Gastrocnemius medialis (tissue), 4 donors: ENCODE measurements at regions of chr2 and their contacts with region 1.

Region 1: GRCh38 chr2:8681786-8682692 is at the start of gene ID2:
- DNase-seq: peak; percentile 97 to 99
- ATAC-seq: peak; percentile 62 to 71
- H3K4me3 ChIP-seq: peak within 1 kb of the TSS; percentile 60 to 75 (median 72)
- H3K27ac ChIP-seq: peak within 1 kb of the TSS; percentile 92 to 99 (median 98)
- H3K4me1 ChIP-seq: peaks cover 32 to 43% of the 10 kb centered on the region in 2 donors
- H3K27me3 ChIP-seq: no peaks in the 10 kb centered on the region
- CTCF ChIP-seq: no peak
- POLR2A ChIP-seq: peak; percentile 97 to 99
- total RNA-seq, gene ID2: 16.6 to 35.9 (median 27.4) TPM

Region 2: DNA sequence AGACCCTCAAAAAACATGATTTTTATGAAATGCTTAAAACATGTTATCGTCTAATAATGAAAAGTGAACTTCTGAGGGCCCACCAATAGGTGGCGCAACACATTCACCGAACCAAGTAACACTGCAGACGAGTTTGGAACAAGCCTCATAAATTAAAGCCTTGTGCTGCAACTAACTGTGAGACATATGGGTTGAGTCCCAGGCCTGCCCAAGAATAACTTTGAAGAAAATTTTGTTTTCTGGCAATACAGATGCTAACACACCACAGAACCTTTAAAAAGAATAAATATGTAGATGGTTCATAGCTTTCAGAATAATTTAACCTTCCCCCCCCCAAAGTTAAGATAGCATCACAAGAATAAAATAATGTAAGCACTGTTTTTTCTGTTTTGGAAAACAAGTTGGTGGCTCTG is 1479.0 kb before region 1 on chr2:
- in situ Hi-C with region 1: loop called in 1 of 4 experiments (anchors 25 kb)
- intact Hi-C with region 1: loop called (anchors 5 kb)
- DNase-seq: no peak
- ATAC-seq: no peak
- H3K4me3 ChIP-seq: no peak overlapping the region
- H3K27ac ChIP-seq: no peak overlapping the region
- H3K4me1 ChIP-seq: no peaks in the 10 kb centered on the region
- H3K27me3 ChIP-seq: no peaks in the 10 kb centered on the region
- CTCF ChIP-seq: peak; percentile 29 to 76 (median 46)
- POLR2A ChIP-seq: no peak

Region 3: GRCh38 chr2:8148260-8149008 is 533.6 kb before region 1 on chr2:
- in situ Hi-C with region 1: no loop called
- intact Hi-C with region 1: loop called (anchors 10 kb)
- DNase-seq: no peak
- ATAC-seq: no peak
- H3K4me3 ChIP-seq: no peak overlapping the region
- H3K27ac ChIP-seq: no peak overlapping the region
- H3K4me1 ChIP-seq: peaks cover 7 to 13% of the 10 kb centered on the region in 2 donors
- H3K27me3 ChIP-seq: no peaks in the 10 kb centered on the region
- CTCF ChIP-seq: no peak
- POLR2A ChIP-seq: no peak

Region 4: GRCh38 chr2:8412586-8412985 is 269.5 kb before region 1 on chr2:
- in situ Hi-C with region 1: no loop called
- intact Hi-C with region 1: loop called (anchors 5 kb)
- DNase-seq: peak; percentile 18 to 53
- ATAC-seq: peak in 1 of 2 donors; percentile 35
- H3K4me3 ChIP-seq: no peak overlapping the region
- H3K27ac ChIP-seq: peak overlapping the region in 2 of 4 donors; percentile 11 to 41
- H3K4me1 ChIP-seq: peaks cover 17% of the 10 kb centered on the region in 2 donors
- H3K27me3 ChIP-seq: no peaks in the 10 kb centered on the region
- CTCF ChIP-seq: no peak
- POLR2A ChIP-seq: no peak

Region 5: DNA sequence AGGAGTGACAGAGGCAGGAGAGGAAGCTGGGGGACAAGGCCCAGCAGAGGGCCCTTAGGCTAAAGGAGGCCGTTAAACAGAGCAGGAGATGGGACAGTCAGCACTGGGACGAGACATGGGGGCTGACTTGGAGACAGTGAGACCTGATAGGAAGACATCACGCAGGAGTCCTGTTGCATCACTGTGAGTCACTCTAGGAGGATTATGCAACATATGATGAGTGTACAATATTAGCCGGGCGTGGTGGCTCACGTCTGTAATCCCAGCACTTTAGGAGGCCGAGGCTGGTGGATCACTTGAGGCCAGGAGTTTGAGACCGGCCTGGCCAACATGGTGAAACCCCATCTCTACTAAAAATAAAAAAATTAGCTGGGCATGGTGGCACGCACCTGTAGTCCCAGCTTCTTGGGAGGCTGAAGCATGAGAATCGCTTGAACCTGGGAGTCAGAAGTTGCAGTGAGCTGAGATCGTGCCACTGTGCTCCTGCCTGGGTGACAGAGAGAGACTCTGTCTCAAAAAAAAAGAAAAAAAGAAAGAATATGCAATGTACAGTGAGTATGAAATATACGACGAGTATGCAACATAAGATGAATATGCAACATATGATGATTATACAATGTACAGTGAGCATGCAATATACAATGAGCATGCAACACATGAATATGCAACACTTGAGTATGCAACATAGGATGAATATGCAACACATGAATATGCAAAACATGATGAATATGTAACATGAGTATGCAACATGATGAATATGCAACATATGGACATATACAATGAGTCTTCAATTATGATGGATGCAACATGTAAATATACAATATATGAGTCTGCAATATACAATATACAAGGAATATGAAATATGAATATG is 83.5 kb before region 1 on chr2:
- in situ Hi-C with region 1: no loop called
- intact Hi-C with region 1: no loop called
- DNase-seq: peak in 1 of 2 donors; percentile 40
- ATAC-seq: peak; percentile 52 to 86
- H3K4me3 ChIP-seq: no peak overlapping the region
- H3K27ac ChIP-seq: no peak overlapping the region
- H3K4me1 ChIP-seq: no peaks in the 10 kb centered on the region
- H3K27me3 ChIP-seq: no peaks in the 10 kb centered on the region
- CTCF ChIP-seq: no peak
- POLR2A ChIP-seq: no peak

Region 6: DNA sequence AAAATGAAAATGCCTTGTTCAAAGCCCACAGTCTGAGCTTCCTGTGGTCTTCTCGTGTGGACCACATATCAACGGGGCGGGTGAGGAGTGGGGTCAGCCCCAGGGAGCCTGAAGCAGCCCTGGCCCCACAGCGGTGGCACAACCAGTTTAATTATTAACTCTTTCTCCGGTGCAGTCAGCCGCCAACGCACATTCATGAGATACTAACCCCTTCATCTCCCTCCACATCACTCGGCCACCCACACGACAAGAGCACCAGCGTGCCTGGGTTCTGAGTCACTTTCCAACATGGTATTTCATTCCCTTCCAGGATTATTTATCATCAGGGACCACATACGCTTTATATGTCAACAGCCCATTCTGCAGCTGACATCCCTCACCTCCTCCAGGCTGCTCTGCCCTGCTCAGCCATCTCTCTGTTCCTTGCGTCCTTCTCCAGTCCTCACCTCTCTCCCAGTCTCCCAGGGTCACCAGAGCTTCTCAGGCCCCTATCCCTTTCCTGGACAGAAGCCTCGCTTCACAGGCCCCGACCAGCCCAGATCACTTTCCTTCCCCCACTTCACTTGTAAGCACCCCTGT is 48.2 kb before region 1 on chr2:
- in situ Hi-C with region 1: no loop called
- intact Hi-C with region 1: no loop called
- DNase-seq: no peak
- ATAC-seq: no peak
- H3K4me3 ChIP-seq: no peak overlapping the region
- H3K27ac ChIP-seq: no peak overlapping the region
- H3K4me1 ChIP-seq: no peaks in the 10 kb centered on the region
- H3K27me3 ChIP-seq: no peaks in the 10 kb centered on the region
- CTCF ChIP-seq: no peak
- POLR2A ChIP-seq: no peak

Region 7: GRCh38 chr2:8794923-8795825 is 113.1 kb after region 1 on chr2:
- in situ Hi-C with region 1: no loop called
- intact Hi-C with region 1: loop called (anchors 2 kb)
- DNase-seq: peak; percentile 42 to 55
- ATAC-seq: peak; percentile 97 to 98
- H3K4me3 ChIP-seq: no peak overlapping the region
- H3K27ac ChIP-seq: peak overlapping the region; percentile 86 to 96 (median 94)
- H3K4me1 ChIP-seq: peaks cover 9 to 19% of the 10 kb centered on the region in 2 donors
- H3K27me3 ChIP-seq: no peaks in the 10 kb centered on the region
- CTCF ChIP-seq: no peak
- POLR2A ChIP-seq: no peak

Region 8: DNA sequence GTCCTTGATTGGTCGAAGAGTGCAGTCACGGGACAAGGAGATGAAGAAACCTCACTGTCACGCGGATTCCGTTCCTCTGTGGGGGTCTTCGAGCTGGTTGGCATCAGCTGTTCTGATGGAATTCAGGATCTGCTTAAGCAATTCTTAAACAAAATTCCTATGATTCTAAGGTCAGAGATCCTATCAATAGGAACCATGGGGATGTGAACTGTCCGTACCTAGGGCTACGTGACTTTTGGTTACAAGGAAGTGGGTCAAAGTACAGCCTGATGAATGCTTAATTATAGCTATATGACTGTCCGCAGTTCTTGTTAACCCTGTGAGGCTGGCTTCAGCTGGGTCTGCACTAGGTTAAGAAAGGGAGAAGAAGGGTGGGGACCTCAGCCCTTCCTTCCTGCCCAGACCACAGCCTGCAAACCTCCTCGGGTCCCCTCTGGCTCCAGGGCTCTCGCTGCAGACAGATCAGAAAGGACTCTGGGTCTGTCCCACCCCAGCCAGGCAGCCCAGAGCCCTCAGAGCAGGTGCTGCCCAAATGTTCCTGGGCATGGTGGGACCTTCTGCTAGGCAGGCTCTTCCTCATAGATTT is 1117.1 kb after region 1 on chr2:
- in situ Hi-C with region 1: no loop called
- intact Hi-C with region 1: no loop called
- DNase-seq: peak in 1 of 2 donors; percentile 8
- ATAC-seq: no peak
- H3K4me3 ChIP-seq: no peak overlapping the region
- H3K27ac ChIP-seq: no peak overlapping the region
- H3K4me1 ChIP-seq: peaks cover 20 to 29% of the 10 kb centered on the region in 2 donors
- H3K27me3 ChIP-seq: no peaks in the 10 kb centered on the region
- CTCF ChIP-seq: no peak
- POLR2A ChIP-seq: no peak

Region 9: DNA sequence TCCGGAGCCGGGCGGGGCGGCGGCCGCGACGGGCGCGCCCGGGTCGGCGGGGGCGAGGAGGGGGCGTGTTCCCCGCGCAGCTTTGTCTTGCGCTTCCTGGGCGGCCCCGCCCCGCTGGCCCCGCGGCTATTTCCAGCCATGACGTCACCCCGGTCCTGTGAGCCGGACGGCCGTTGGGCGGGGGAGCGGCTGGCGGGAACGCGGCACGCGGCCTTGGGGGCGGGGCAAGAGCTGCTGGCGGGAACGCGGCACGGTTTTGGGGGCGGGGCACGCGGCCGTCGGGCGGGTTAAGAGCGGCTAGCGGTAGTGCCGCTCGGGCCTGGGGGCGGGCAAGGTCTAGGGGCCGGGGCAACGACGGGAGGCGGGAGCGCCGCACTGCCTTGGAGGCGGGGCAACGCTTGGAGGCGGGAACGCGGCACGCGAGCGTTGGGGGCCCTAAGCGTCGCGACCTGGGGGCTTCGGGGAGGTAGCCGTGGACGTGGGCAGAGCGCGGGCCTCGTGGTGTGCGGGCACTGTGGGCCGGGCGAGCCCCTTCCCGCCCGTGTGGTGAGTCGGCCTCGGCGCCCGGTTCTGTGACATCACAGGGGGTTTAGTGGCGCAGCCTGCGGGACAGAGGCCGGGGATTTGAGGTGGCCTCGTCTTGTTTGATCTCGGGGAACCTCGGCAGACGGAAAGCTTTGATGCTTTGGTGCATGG is 1362.0 kb after region 1 on chr2:
- in situ Hi-C with region 1: no loop called
- intact Hi-C with region 1: loop called (anchors 5 kb)
- DNase-seq: peak; percentile 96
- ATAC-seq: peak; percentile 77
- H3K4me3 ChIP-seq: peak overlapping the region; percentile 58 to 69 (median 65)
- H3K27ac ChIP-seq: peak overlapping the region; percentile 94 to 95 (median 94)
- H3K4me1 ChIP-seq: peaks cover 35 to 62% of the 10 kb centered on the region in 2 donors
- H3K27me3 ChIP-seq: no peaks in the 10 kb centered on the region
- CTCF ChIP-seq: no peak
- POLR2A ChIP-seq: peak; percentile 8 to 59